Naive thymus-derived CD8-positive, alpha-beta T cell (primary cell): ENCODE measurements at regions of chr1 and their contacts with region 1.

Region 1: GRCh38 chr1:40392221-40392620 is 18.7 kb downstream of the SMAP2 start:
- DNase-seq: no peak
- ATAC-seq: no peak
- H3K4me3 Mint-ChIP-seq: peak overlapping the region; percentile 84 to 99 (median 95)
- H3K27ac Mint-ChIP-seq: peak overlapping the region; percentile 97 to 100 (median 99)
- H3K4me1 Mint-ChIP-seq: peaks cover 41 to 95% (median 90%) of the 10 kb centered on the region in 4 donors
- H3K27me3 Mint-ChIP-seq: no peaks in the 10 kb centered on the region

Region 2: GRCh38 chr1:40404670-40405462 is 12.6 kb after region 1 on chr1:
- POLR2A ChIA-PET with region 1: interaction called, 50 read pairs
- DNase-seq: peak in 8 of 10 donors; percentile 36 to 86 (median 54)
- ATAC-seq: peak; percentile 73 to 90
- H3K4me3 Mint-ChIP-seq: peak overlapping the region; percentile 12 to 83 (median 65)
- H3K27ac Mint-ChIP-seq: peak overlapping the region; percentile 87 to 99 (median 96)
- H3K4me1 Mint-ChIP-seq: peaks cover 28 to 81% (median 72%) of the 10 kb centered on the region in 4 donors
- H3K27me3 Mint-ChIP-seq: no peaks in the 10 kb centered on the region

Region 3: GRCh38 chr1:40435471-40435870 is 43.2 kb after region 1 on chr1:
- POLR2A ChIA-PET with region 1: no interaction called
- DNase-seq: no peak
- ATAC-seq: no peak
- H3K4me3 Mint-ChIP-seq: no peak overlapping the region
- H3K27ac Mint-ChIP-seq: peak overlapping the region in 1 of 10 donors; percentile 51
- H3K4me1 Mint-ChIP-seq: peaks cover 0 to 7% (median 3%) of the 10 kb centered on the region in 4 donors
- H3K27me3 Mint-ChIP-seq: no peaks in the 10 kb centered on the region